MCF 10A (cell line): ENCODE measurements at regions of chr5 and their contacts with region 1.

Region 1: GRCh38 chr5:39283231-39283818 is 64.0 kb upstream of the FYB1 start:
- DNase-seq: peak; percentile 81
- H3K4me3 Mint-ChIP-seq: no peak overlapping the region
- H3K27ac Mint-ChIP-seq: no peak overlapping the region
- H3K4me1 Mint-ChIP-seq: peaks cover 6% of the 10 kb centered on the region
- H3K27me3 Mint-ChIP-seq: no peaks in the 10 kb centered on the region
- CTCF ChIP-seq: peak; percentile 54

Region 2: GRCh38 chr5:38994324-38994927 is 288.9 kb before region 1 on chr5:
- CTCF ChIA-PET with region 1: interaction called, 8 read pairs
- POLR2A ChIA-PET with region 1: interaction called, 5 read pairs
- intact Hi-C with region 1: loop called (anchors 1 kb)
- DNase-seq: peak; percentile 76
- H3K4me3 Mint-ChIP-seq: no peak overlapping the region
- H3K27ac Mint-ChIP-seq: no peak overlapping the region
- H3K4me1 Mint-ChIP-seq: peaks cover 6% of the 10 kb centered on the region
- H3K27me3 Mint-ChIP-seq: no peaks in the 10 kb centered on the region
- CTCF ChIP-seq: peak; percentile 45

Region 3: DNA sequence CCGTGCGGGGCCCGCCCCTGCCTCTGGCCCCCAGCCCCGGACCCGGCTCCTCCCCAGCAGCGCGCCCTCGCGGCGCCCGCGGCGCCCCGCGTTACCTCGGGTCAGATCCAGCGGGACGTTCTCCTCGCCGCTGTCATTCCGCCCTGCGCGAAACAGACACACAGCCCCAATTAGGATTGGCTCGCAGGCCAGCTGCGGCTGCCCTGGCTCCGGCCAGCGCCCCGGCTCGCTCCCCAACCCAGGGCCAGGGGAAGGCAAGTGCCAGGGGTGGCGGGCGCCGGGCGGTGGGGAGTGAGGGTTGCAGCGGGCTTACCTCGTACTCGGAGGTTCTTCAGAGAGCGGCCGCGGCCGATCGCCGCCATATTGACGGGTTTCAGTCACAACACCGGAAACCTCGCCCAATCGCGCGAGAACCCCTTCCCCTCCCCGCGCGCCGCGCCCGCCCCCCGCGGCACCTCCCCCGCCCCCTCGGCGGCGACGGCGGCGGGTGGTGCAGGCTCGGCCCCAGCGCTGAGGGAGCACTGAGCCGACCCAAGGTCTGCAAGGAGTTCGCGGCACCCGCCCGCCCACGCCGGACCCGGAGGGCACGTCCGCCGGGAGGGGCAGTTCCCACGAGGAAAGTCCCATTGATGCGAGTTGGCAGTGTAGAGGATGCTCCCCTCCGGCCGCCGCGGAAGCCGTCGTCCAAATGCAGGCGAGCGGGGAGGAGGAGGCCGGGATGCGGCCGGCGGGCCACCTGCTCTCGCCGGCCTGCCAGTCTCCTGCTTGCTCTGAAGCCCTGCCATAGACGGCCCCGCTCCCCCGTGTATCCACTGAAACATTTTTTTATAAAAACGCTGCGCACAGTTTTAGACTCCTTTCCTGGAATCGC is 209.1 kb before region 1 on chr5 and contains the start of gene RICTOR:
- CTCF ChIA-PET with region 1: interaction called, 6 read pairs
- POLR2A ChIA-PET with region 1: interaction called, 3 read pairs
- intact Hi-C with region 1: loop called (anchors 5 kb)
- DNase-seq: peak; percentile 88
- H3K4me3 Mint-ChIP-seq: peak within 1 kb of the TSS; percentile 94
- H3K27ac Mint-ChIP-seq: peak within 1 kb of the TSS; percentile 50
- H3K4me1 Mint-ChIP-seq: peaks cover 28% of the 10 kb centered on the region
- H3K27me3 Mint-ChIP-seq: no peaks in the 10 kb centered on the region
- CTCF ChIP-seq: no peak
- total RNA-seq, gene RICTOR: 24.8 and 25.7 TPM in 2 replicates

Region 4: GRCh38 chr5:39194466-39195136 is 88.7 kb before region 1 on chr5:
- CTCF ChIA-PET with region 1: interaction called, 16 read pairs
- POLR2A ChIA-PET with region 1: no interaction called
- intact Hi-C with region 1: no loop called
- DNase-seq: peak; percentile 91
- H3K4me3 Mint-ChIP-seq: no peak overlapping the region
- H3K27ac Mint-ChIP-seq: peak overlapping the region; percentile 26
- H3K4me1 Mint-ChIP-seq: peaks cover 31% of the 10 kb centered on the region
- H3K27me3 Mint-ChIP-seq: no peaks in the 10 kb centered on the region
- CTCF ChIP-seq: no peak

Region 5: GRCh38 chr5:39224196-39224761 is 59.0 kb before region 1 on chr5:
- CTCF ChIA-PET with region 1: interaction called, 223 read pairs
- POLR2A ChIA-PET with region 1: interaction called, 3 read pairs
- intact Hi-C with region 1: no loop called
- DNase-seq: peak; percentile 74
- H3K4me3 Mint-ChIP-seq: no peak overlapping the region
- H3K27ac Mint-ChIP-seq: peak overlapping the region; percentile 53
- H3K4me1 Mint-ChIP-seq: peaks cover 25% of the 10 kb centered on the region
- H3K27me3 Mint-ChIP-seq: no peaks in the 10 kb centered on the region
- CTCF ChIP-seq: no peak

Region 6: GRCh38 chr5:39256477-39257235 is 26.7 kb before region 1 on chr5:
- CTCF ChIA-PET with region 1: interaction called, 22 read pairs
- POLR2A ChIA-PET with region 1: interaction called, 4 read pairs
- intact Hi-C with region 1: no loop called
- DNase-seq: peak; percentile 86
- H3K4me3 Mint-ChIP-seq: peak overlapping the region; percentile 57
- H3K27ac Mint-ChIP-seq: peak overlapping the region; percentile 90
- H3K4me1 Mint-ChIP-seq: peaks cover 23% of the 10 kb centered on the region
- H3K27me3 Mint-ChIP-seq: no peaks in the 10 kb centered on the region
- CTCF ChIP-seq: no peak

Region 7: DNA sequence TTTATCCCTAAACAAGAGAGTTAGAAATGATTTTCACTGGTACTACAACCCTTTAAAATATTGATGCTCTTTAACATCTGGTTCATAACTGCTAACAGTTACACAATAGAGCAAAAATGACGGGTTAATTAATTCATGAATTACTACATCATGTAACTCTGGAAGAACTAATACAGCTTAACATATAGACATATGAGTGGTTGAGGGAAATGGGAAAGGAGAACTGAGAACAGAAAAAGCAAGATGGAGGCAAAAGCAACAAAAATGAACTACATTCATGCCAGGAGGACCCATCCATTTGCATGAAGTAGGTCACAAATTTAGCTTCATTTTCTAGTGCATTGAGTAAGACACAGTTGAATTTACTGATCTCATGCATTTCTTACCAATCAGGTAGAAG is 19.1 kb after region 1 on chr5:
- CTCF ChIA-PET with region 1: interaction called, 11 read pairs
- POLR2A ChIA-PET with region 1: no interaction called
- intact Hi-C with region 1: no loop called
- DNase-seq: no peak
- H3K4me3 Mint-ChIP-seq: no peak overlapping the region
- H3K27ac Mint-ChIP-seq: no peak overlapping the region
- H3K4me1 Mint-ChIP-seq: no peaks in the 10 kb centered on the region
- H3K27me3 Mint-ChIP-seq: no peaks in the 10 kb centered on the region
- CTCF ChIP-seq: no peak

Region 8: GRCh38 chr5:39412721-39413394 is 129.5 kb after region 1 on chr5:
- CTCF ChIA-PET with region 1: no interaction called
- POLR2A ChIA-PET with region 1: no interaction called
- intact Hi-C with region 1: no loop called
- DNase-seq: no peak
- H3K4me3 Mint-ChIP-seq: no peak overlapping the region
- H3K27ac Mint-ChIP-seq: no peak overlapping the region
- H3K4me1 Mint-ChIP-seq: peaks cover 15% of the 10 kb centered on the region
- H3K27me3 Mint-ChIP-seq: no peaks in the 10 kb centered on the region
- CTCF ChIP-seq: no peak